Endothelial cell of umbilical vein (primary cell): ENCODE measurements at regions of chr18 and their contacts with region 1.

Region 1: GRCh38 chr18:24333071-24333470 is 64.6 kb downstream of the OSBPL1A start:
- DNase-seq: no peak
- H3K4me3 ChIP-seq: no peak overlapping the region
- H3K27ac ChIP-seq: no peak overlapping the region
- H3K4me1 ChIP-seq: no peaks in the 10 kb centered on the region
- H3K27me3 ChIP-seq: no peaks in the 10 kb centered on the region
- CTCF ChIP-seq: no peak
- POLR2A ChIP-seq: no peak

Region 2: GRCh38 chr18:25239581-25240419 is 906.7 kb after region 1 on chr18:
- CTCF ChIA-PET with region 1: no interaction called
- POLR2A ChIA-PET with region 1: interaction called, 12 read pairs
- dilution Hi-C with region 1: no loop called
- intact Hi-C with region 1: no loop called
- DNase-seq: peak; percentile 91
- H3K4me3 ChIP-seq: no peak overlapping the region
- H3K27ac ChIP-seq: peak overlapping the region; percentile 19
- H3K4me1 ChIP-seq: peaks cover 60% of the 10 kb centered on the region
- H3K27me3 ChIP-seq: no peaks in the 10 kb centered on the region
- CTCF ChIP-seq: no peak
- POLR2A ChIP-seq: peak; percentile 69